Sigmoid colon (tissue), 7 donors: ENCODE measurements at regions of chr11 and their contacts with region 1.

Region 1: DNA sequence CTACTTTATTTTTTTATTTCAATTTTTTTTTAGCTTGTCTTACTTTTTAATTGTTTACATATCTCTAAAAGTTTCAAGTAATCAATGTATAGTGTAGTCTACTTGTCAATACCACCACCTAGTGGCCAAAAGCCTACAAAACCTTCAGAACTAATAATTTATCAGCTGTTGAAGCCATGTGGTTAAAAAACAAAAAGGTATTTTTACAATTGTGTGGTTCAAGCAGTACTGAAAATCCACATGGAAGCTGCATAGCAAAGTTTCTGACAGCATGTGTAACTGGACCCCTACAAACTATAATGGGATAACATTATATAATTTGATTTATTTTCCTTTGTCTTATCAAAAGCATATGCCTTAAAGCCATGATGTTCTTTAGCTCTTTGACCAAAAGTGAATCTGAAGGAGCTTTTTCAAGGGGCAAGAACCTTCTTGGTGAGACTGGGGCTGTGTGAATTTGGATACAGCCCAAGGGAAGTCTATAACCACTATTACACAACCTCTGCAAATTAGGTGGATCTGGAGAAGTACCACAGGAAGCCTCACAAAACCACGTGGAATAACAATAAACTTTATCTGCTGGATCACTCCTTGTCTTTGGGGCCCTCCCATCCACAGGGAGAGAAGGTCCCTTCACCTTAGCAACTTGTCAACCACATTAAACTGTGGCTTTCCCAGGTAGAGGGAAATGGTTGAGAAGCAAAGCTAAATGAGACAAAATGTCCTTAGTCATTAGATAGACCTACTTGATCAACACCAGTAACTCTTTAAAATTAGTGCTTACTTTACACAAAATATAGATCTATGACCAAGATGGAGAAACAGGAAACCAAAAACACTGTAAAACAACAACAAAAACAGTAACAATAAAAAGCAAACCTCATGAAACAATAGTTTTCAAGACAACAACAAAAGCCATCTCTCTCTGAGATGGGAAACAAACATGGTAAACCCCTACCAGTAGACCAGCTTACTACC is 9.9 kb downstream of the NARS2 start:
- DNase-seq: no peak
- H3K4me3 ChIP-seq: no peak overlapping the region
- H3K27ac ChIP-seq: no peak overlapping the region
- H3K4me1 ChIP-seq: peaks cover 0 to 25% (median 18%) of the 10 kb centered on the region in 4 donors
- H3K27me3 ChIP-seq: no peaks in the 10 kb centered on the region
- CTCF ChIP-seq: peak in 3 of 4 experiments; percentile 58 to 67 (median 61)
- EP300 ChIP-seq: no peak
- POLR2A ChIP-seq: no peak

Region 2: DNA sequence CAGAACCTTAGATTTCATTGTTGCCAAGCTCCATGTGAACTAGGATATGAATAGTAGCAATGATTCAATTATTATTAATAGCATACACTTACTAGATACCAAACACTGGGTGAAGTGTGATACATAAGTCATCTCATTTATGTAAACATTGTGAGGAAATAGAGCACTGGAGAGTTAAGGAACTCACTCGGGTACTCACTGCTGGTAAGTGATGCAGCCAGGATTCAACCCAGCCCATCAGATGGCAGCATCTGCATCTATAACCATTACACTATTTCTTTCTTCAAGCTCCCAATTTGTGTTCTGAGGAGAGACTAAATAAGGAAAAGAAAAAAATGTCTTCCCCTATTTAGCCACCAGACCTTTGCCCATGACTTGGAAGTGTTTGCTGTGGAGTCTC is 415.1 kb before region 1 on chr11:
- intact Hi-C with region 1: loop called (anchors 5 kb)
- DNase-seq: no peak
- H3K4me3 ChIP-seq: no peak overlapping the region
- H3K27ac ChIP-seq: peak overlapping the region in 1 of 4 donors; percentile 42
- H3K4me1 ChIP-seq: peaks cover 0 to 15% (median 3%) of the 10 kb centered on the region in 4 donors
- H3K27me3 ChIP-seq: no peaks in the 10 kb centered on the region
- CTCF ChIP-seq: peak in 2 of 4 experiments; percentile 19 to 20
- EP300 ChIP-seq: no peak
- POLR2A ChIP-seq: no peak

Region 3: GRCh38 chr11:78228467-78228866 is 336.3 kb before region 1 on chr11:
- intact Hi-C with region 1: loop called (anchors 2 kb)
- DNase-seq: no peak
- H3K4me3 ChIP-seq: no peak overlapping the region
- H3K27ac ChIP-seq: no peak overlapping the region
- H3K4me1 ChIP-seq: peaks cover 0 to 12% (median 3%) of the 10 kb centered on the region in 4 donors
- H3K27me3 ChIP-seq: no peaks in the 10 kb centered on the region
- CTCF ChIP-seq: peak in 3 of 4 experiments; percentile 30 to 45 (median 43)
- EP300 ChIP-seq: no peak
- POLR2A ChIP-seq: no peak